ENCODE measurements at regions of chr9 and their contacts with region 1.

Region 1: DNA sequence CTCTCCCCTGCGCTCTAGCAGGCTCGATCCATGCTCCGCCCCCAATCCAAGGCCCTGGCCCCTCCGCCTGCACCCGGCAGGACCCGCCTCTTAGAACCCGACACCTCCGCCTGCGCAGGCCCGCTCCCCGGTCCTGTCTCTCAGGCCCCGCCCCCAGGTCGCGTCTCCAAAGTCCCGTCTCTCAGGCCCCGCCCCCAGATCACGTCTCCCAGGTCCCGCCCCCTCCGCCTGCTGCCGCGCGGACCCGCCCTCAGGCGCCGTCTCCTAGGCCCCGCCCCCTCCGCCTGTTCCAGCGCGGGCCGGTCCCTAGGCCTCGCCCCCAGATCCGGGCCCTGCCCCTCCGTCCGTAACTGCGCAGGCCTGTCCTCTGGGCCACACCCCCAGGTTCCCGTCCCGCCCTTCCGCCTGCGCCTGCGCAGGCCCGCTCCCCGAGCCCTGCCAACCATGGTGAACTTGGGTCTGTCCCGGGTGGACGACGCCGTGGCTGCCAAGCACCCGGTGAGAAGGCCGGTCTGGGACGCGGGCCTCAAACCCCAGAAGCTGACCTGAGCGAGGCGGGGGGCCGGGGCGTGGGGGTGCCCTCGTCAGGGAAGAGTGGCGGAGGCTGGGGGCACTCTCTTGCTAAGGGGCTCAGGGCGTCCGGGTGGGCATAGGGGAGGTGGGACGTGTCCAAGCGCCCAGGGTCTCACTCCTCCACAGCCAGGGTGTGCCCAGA is at the start of gene TMEM141:
- DNase-seq: peak; percentile 100
- ATAC-seq: peak; percentile 93
- H3K4me3 Mint-ChIP-seq: peak within 1 kb of the TSS; percentile 80
- H3K27ac Mint-ChIP-seq: peak within 1 kb of the TSS; percentile 84
- H3K4me1 Mint-ChIP-seq: peaks cover 20% of the 10 kb centered on the region
- H3K27me3 Mint-ChIP-seq: no peaks in the 10 kb centered on the region
- total RNA-seq, gene TMEM141: 30.9 to 47.1 TPM

Region 2: DNA sequence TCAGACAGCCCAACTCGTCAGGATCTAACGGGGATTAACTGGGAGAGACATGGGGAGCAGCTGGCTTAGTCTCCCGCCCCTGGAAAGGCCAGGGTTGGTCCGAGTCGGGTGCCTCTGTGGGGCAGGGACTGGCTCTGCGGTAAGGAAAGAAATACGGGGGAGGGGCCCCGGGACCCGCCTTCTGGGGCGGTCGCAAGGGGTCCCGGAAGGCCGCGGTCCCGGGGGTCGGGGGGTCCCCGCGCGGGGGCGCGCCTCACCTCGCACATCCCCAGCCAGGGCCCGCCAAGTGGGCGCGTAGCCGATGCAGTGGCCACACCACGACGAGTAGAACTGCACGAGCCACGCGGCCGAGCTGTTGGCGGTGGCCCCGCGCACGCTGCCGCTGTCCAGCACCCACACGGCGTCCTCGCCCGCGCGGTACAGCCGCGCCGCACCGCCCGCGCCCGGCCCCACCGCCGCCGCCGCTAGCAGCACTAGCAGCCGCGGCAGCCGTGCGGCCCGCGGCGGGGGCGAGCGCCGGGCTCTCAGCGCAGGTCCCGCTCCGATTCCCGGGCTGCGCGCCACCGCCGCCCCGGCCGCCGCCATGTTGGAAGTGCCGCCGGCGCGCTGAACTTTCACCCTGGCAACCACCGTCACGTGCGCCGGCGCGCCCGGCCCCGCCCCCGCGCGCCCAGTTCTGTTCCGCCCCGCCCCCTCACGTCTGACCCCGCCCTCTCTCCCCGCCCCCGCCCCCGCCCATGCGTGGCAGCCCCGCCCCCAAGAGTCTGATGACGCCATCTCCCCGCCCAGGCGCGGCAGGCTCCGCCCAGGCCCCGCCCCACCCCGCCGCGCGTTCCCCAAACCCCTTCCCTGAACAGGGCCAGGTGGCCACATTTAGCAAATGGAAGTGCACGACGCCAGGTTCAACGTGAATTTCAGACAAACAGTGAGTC is 545.6 kb before region 1 on chr9 and contains the start of gene QSOX2:
- CTCF ChIA-PET with region 1: no interaction called
- POLR2A ChIA-PET with region 1: no interaction called
- intact Hi-C with region 1: loop called in 1 of 2 experiments (anchors 10 kb)
- DNase-seq: peak; percentile 94
- ATAC-seq: peak; percentile 61
- H3K4me3 Mint-ChIP-seq: peak within 1 kb of the TSS; percentile 85
- H3K27ac Mint-ChIP-seq: peak within 1 kb of the TSS; percentile 95
- H3K4me1 Mint-ChIP-seq: peaks cover 28% of the 10 kb centered on the region
- H3K27me3 Mint-ChIP-seq: no peaks in the 10 kb centered on the region
- total RNA-seq, gene QSOX2: 18.1 to 21.2 TPM

Region 3: DNA sequence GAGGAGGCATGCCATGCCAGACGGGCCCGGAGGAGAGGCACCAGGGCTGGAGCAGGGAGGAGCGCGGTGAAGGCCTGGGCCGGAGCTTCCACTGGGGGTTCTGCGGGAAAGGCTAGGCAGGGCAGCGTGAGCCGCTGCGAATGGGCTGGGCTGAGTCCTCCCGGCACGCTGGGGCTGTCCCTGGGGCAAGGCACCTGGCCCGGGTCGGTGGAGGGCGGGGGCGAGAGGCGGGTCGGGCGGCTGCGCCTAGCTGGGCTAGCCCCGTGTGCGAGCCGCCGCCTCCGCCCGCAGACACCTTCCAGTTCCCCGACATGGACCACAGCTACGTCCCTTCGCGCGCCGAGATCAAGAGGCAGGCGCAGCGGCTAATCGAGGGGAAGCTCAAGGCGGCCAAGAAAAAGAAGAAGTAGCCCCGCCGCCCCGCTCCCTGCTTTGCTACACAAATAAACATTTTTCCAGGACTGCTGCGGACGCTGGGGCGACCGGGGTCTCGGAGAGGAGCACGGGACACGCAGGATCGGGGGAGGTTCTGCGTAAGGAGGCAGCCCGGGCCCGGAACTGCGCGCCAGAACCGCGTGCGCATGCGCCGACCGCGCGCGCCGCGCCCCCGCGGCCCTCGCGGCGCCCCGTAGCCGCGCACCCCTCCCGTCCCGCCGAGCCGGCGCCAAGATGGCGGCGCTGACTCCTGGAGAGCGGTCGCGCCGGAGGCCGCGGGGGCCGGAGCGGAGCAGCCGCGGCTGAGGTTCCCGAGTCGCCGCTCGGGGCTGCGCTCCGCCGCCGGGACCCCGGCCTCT is 16.4 kb after region 1 on chr9 and contains the start of gene RABL6:
- CTCF ChIA-PET with region 1: interaction called, 8 read pairs
- POLR2A ChIA-PET with region 1: no interaction called
- intact Hi-C with region 1: loop called in 1 of 2 experiments (anchors 1 kb)
- DNase-seq: peak; percentile 86
- ATAC-seq: peak; percentile 88
- H3K4me3 Mint-ChIP-seq: peak within 1 kb of the TSS; percentile 81
- H3K27ac Mint-ChIP-seq: peak within 1 kb of the TSS; percentile 88
- H3K4me1 Mint-ChIP-seq: peaks cover 33% of the 10 kb centered on the region
- H3K27me3 Mint-ChIP-seq: no peaks in the 10 kb centered on the region
- total RNA-seq, gene RABL6: 66.2 to 71.8 TPM

Region 4: GRCh38 chr9:136944519-136945279 is 153.6 kb after region 1 on chr9 and contains the starts of genes C8G and FBXW5:
- CTCF ChIA-PET with region 1: interaction called, 3 read pairs
- POLR2A ChIA-PET with region 1: no interaction called
- intact Hi-C with region 1: loop called in 1 of 2 experiments (anchors 1 kb)
- DNase-seq: peak; percentile 97
- ATAC-seq: peak; percentile 84
- H3K4me3 Mint-ChIP-seq: peak within 1 kb of the TSS; percentile 77
- H3K27ac Mint-ChIP-seq: peak within 1 kb of the TSS; percentile 88
- H3K4me1 Mint-ChIP-seq: peaks cover 9% of the 10 kb centered on the region
- H3K27me3 Mint-ChIP-seq: no peaks in the 10 kb centered on the region
- total RNA-seq, gene C8G: 0.77 TPM in 1 of 2 experiments, not detected in the other
- total RNA-seq, gene FBXW5: 54.4 to 66.4 TPM

Region 5: GRCh38 chr9:137064027-137064879 is 273.2 kb after region 1 on chr9:
- CTCF ChIA-PET with region 1: interaction called, 4 read pairs
- POLR2A ChIA-PET with region 1: no interaction called
- intact Hi-C with region 1: loop called (anchors 1 to 10 kb)
- DNase-seq: peak; percentile 79
- ATAC-seq: no peak
- H3K4me3 Mint-ChIP-seq: no peak overlapping the region
- H3K27ac Mint-ChIP-seq: no peak overlapping the region
- H3K4me1 Mint-ChIP-seq: peaks cover 5% of the 10 kb centered on the region
- H3K27me3 Mint-ChIP-seq: no peaks in the 10 kb centered on the region

Region 6: DNA sequence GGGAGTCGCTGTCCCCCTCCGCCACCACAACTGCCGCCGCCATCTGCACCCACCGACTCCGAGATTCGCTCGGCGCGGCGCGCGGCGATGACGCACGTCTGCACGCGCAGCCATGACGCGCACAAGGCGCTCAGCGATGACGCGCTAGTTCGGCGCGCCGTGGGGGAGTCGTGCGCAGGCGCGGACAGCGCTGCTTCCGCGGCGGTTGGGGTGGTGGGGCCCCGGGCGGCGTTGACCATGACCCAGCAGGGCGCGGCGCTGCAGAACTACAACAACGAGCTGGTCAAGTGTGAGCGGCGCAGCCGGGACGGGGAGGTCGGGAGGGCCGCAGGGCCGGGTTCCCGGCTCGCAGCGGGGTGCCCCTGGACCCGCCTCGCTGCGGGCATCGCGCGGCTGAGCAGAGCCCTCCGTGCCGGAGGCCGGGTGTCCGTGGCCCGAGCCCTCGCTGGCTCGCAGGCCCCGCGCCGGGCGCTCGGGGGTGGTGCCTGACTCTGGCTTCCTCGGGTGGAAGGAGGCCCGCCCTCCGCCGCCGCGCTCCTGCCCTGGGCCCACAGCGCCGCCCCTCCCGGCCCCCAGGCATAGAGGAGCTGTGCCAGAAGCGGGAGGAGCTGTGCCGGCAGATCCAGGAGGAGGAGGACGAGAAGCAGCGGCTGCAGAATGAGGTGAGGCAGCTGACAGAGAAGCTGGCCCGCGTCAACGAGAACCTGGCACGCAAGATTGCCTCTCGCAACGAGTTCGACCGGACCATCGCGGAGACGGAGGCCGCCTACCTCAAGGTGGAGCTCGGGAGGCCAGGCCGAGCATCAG is 397.6 kb after region 1 on chr9 and contains the starts of genes ANAPC2 and SSNA1:
- CTCF ChIA-PET with region 1: interaction called, 3 read pairs
- POLR2A ChIA-PET with region 1: no interaction called
- intact Hi-C with region 1: loop called in 1 of 2 experiments (anchors 1 kb)
- DNase-seq: peak; percentile 96
- ATAC-seq: peak; percentile 85
- H3K4me3 Mint-ChIP-seq: peak within 1 kb of the TSS; percentile 91
- H3K27ac Mint-ChIP-seq: peak within 1 kb of the TSS; percentile 88
- H3K4me1 Mint-ChIP-seq: peaks cover 33% of the 10 kb centered on the region
- H3K27me3 Mint-ChIP-seq: no peaks in the 10 kb centered on the region
- total RNA-seq, gene ANAPC2: 30.8 to 38.4 TPM
- total RNA-seq, gene SSNA1: 53.6 to 58.6 TPM

Region 7: GRCh38 chr9:137459147-137459600 is 668.1 kb after region 1 on chr9 and contains the start of gene NSMF:
- CTCF ChIA-PET with region 1: no interaction called
- POLR2A ChIA-PET with region 1: no interaction called
- intact Hi-C with region 1: loop called in 1 of 2 experiments (anchors 1 kb)
- DNase-seq: peak; percentile 98
- ATAC-seq: peak; percentile 66
- H3K4me3 Mint-ChIP-seq: peak within 1 kb of the TSS; percentile 39
- H3K27ac Mint-ChIP-seq: peak within 1 kb of the TSS; percentile 78
- H3K4me1 Mint-ChIP-seq: peaks cover 33% of the 10 kb centered on the region
- H3K27me3 Mint-ChIP-seq: no peaks in the 10 kb centered on the region
- total RNA-seq, gene NSMF: 63.6 to 65.0 TPM

Measured in activated CD4-positive, alpha-beta T cell treated with anti-CD3 and anti-CD28 coated beads for 36 hours (primary cell).